Ascending aorta (tissue), 2 donors: ENCODE measurements at regions of chr7 and their contacts with region 1.

Region 1: GRCh38 chr7:73851410-73852234 is 9.3 kb upstream of the METTL27 start:
- DNase-seq: peak in 1 of 2 donors; percentile 83
- H3K4me3 ChIP-seq: no peak overlapping the region
- H3K27ac ChIP-seq: peak overlapping the region; percentile 68 to 82
- H3K4me1 ChIP-seq: peaks cover 0 to 9% of the 10 kb centered on the region in 2 donors
- H3K27me3 ChIP-seq: no peaks in the 10 kb centered on the region
- CTCF ChIP-seq: no peak

Region 2: DNA sequence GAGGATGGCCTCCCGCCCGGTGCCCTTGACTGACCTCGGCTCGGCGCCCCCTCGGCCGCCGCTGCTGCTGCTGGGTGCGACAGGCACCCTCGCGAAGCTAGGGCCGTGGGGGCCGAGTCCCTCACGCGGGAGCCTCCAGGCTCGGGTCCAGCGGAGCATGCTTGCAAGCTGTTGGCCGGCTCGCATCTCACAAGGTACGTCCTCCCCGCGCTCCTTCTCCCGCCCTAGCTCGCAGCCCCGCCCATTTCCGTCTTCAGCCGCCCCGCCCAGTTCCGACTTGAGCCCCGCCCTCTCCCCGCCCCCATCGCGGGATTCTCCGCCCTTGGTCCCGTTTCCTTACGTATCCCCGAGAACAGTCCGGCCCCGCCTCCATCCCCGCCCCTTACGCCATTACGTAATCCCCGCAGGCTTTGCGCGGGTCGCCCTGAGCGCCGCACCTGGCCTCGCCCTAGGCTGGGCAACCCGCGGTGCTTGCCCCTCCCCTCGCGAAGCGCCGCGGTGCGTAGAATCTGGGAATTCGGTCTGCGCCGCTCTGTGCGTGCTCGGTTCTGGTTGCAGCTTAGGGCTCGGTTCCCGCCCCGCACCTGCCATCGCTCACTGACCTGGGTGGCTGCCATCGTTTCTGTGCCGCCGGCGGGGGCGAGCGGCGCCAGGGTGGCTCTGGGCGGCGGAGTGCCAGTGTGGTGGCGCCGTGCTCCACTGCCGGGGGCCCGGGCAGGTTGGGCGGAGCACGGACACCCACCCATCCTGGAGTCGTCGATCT is 112.8 kb before region 1 on chr7 and contains the start of gene ABHD11:
- intact Hi-C with region 1: loop called (anchors 5 kb)
- DNase-seq: peak; percentile 84 to 98
- H3K4me3 ChIP-seq: peak within 1 kb of the TSS; percentile 83 to 89
- H3K27ac ChIP-seq: peak within 1 kb of the TSS; percentile 84 to 92
- H3K4me1 ChIP-seq: peaks cover 9 to 16% of the 10 kb centered on the region in 2 donors
- H3K27me3 ChIP-seq: no peaks in the 10 kb centered on the region
- CTCF ChIP-seq: no peak
- total RNA-seq, gene ABHD11: 55.7 TPM

Region 3: GRCh38 chr7:73811760-73812168 is 39.9 kb before region 1 on chr7:
- intact Hi-C with region 1: loop called (anchors 1 kb)
- DNase-seq: peak in 1 of 2 donors; percentile 80
- H3K4me3 ChIP-seq: no peak overlapping the region
- H3K27ac ChIP-seq: no peak overlapping the region
- H3K4me1 ChIP-seq: no peaks in the 10 kb centered on the region
- H3K27me3 ChIP-seq: no peaks in the 10 kb centered on the region
- CTCF ChIP-seq: peak; percentile 80 to 92 (median 82)